ENCODE measurements at regions of chr3 and their contacts with region 1.

Region 1: DNA sequence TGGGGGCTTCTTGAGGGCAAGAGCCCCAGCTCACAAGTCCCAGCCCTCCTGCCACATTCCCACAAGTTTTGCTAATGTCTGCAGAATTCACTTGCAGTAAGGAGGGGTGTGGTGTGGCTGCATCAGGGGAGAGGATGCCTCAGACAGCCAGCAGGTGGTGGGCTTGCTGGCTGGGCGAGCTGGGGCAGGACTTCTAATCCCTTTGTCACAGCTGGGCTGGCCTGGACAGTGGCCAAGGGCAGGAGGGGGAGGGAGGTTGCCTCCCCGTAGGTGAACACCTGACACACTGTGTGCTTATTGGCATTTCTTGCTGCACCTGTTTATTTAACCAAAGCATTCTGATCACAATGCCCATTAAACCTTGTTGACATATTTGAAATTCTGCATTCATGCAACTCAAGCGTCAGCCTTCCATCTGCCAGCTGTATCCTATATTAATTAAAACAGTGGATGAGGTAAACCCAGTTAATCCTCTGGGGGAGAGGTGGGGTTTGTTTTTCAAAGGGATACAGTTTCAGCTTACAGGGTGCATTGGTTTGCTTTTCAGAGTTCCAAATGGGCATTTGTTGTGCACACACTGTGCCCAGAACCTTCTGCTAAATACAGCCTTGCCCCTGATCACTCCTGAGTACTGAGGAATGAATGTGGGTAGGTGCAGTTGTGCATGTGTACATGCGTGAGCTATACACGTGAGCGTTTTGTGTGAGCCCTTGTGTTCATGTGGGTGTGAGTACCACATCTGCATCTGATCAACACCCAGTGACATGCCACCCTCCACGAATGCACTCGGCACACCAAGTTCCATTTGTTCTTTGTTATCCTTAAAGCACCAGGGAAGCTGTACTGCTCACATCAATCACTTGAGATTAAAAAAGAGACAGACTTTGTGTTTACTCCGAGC is 268.7 kb downstream of the XXYLT1 start:
- DNase-seq: peak; percentile 57
- ATAC-seq: peak; percentile 56 to 70

Region 2: GRCh38 chr3:194749631-194750490 is 252.3 kb before region 1 on chr3:
- intact Hi-C with region 1: no loop called
- DNase-seq: no peak
- ATAC-seq: peak; percentile 30 to 41

Region 3: DNA sequence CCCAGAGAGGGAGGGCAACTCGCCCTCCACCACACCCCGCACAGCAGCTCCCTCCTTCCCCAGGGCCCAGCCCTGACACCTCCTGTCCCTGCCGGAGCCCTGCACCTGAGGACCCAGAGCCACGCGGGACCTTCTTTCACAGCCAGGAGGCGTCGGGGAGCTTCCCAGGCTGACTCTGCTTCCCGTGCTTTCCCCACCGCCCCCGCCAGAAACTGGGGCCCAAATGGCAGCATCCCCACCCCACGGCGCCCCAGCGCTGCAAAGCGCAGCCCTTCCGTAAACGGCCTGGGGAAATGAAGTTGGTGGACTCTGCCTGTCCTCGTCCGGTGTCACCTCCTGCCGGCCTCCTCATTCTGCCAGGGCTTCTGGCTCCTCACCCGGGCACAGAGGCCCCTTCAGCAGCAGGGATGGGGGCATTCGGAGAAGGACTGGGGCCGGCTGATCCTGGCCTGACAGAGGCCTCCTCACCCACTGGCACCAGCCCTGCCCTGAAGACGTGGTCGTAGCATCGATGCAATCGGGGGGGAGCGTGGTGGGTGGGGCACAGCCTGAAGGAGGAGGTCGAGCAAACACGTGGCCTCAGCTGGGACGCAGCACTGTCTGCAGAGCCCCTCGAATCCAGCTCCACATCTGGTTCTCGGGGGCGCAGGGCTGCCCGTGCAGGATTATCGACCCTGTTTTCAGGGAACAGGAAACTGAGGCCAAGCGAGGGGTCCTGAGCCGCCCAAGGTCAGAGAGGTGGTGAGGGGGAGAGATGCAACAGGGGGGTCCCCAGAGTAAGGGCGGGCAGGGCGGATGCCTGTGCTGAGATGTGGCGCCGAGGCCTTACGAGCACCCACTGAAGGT is 33.4 kb after region 1 on chr3:
- intact Hi-C with region 1: no loop called
- DNase-seq: no peak
- ATAC-seq: peak in 1 of 2 donors; percentile 28

Region 4: DNA sequence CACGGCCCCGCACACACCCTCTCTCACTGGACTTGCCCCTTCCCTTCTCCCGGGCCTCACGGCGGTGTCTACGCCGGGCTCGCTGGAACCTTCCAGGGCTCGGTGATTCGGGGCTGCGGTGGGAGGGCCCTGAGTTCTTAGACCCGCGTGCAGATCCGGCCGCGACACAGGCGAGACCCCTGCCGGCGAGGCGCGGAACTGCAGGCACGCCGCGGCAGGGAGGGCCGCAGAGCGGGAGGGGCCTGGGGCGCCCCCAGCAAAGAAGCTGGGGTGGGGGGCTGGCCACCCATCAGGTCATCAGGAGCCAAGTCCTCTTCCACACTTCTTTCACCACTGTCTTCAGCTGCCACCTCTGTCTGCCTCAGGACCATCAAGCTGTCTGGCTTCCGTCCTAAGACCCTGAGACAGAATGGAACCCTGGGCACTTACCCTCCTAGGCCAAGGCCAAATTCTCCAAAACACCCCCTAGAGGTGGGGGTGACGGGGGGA is 104.3 kb after region 1 on chr3:
- intact Hi-C with region 1: loop called (anchors 10 kb)
- DNase-seq: peak; percentile 82
- ATAC-seq: peak; percentile 80 to 86

Region 5: GRCh38 chr3:195259475-195260279 is 257.5 kb after region 1 on chr3:
- intact Hi-C with region 1: loop called in 1 of 2 experiments (anchors 10 kb)
- DNase-seq: peak; percentile 94
- ATAC-seq: peak; percentile 85 to 90

Measured in left cardiac atrium (tissue), 4 donors.